Sciatic nerve (tissue), 2 donors: ENCODE measurements at regions of chr9 and their contacts with region 1.

Region 1: GRCh38 chr9:122810306-122810946 is 10.5 kb downstream of the OR1K1 start:
- DNase-seq: peak; percentile 80
- ATAC-seq: peak; percentile 93

Region 2: GRCh38 chr9:122092611-122093506 is 717.6 kb before region 1 on chr9 and contains the start of gene TTLL11:
- intact Hi-C with region 1: loop called (anchors 10 kb)
- DNase-seq: peak; percentile 98
- ATAC-seq: peak; percentile 99
- total RNA-seq, gene TTLL11: 14.2 TPM

Region 3: GRCh38 chr9:122477346-122477745 is 333.1 kb before region 1 on chr9:
- intact Hi-C with region 1: loop called (anchors 10 kb)
- DNase-seq: no peak
- ATAC-seq: no peak

Region 4: DNA sequence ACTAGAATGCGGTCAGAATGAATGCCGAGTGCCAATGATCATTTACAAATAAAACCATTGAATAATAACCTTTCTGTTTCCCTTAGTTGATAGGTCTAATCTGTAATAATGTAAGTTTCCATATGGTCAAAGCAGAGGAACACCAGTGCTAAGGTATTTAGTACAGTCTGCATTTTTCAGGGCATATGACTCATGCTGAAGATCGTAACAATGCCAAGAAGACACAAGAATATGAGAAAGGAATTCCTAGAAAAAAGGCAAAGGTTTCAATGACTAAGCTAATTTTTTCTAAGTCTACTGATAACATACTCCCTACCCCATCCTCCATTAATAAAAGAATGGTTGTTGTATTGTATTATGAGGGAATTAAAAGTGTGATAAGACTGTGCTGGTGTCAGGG is 230.1 kb before region 1 on chr9:
- intact Hi-C with region 1: no loop called
- DNase-seq: no peak
- ATAC-seq: no peak

Region 5: GRCh38 chr9:123414946-123415821 is 604.8 kb after region 1 on chr9:
- intact Hi-C with region 1: no loop called
- DNase-seq: no peak
- ATAC-seq: no peak